ENCODE measurements at regions of chrX and their contacts with region 1.

Region 1: GRCh38 chrX:78029663-78030062 is 60.2 kb upstream of the PGAM4 start:
- DNase-seq: peak; percentile 49
- H3K4me3 Mint-ChIP-seq: no peak overlapping the region
- H3K27ac Mint-ChIP-seq: no peak overlapping the region
- H3K4me1 Mint-ChIP-seq: no peaks in the 10 kb centered on the region
- H3K27me3 Mint-ChIP-seq: no peaks in the 10 kb centered on the region
- CTCF ChIP-seq: peak; percentile 64

Region 2: GRCh38 chrX:76279000-76279399 is 1750.7 kb before region 1 on chrX:
- CTCF ChIA-PET with region 1: interaction called, 23 read pairs
- POLR2A ChIA-PET with region 1: no interaction called
- intact Hi-C with region 1: loop called (anchors 1 kb)
- DNase-seq: peak; percentile 60
- H3K4me3 Mint-ChIP-seq: no peak overlapping the region
- H3K27ac Mint-ChIP-seq: no peak overlapping the region
- H3K4me1 Mint-ChIP-seq: no peaks in the 10 kb centered on the region
- H3K27me3 Mint-ChIP-seq: no peaks in the 10 kb centered on the region
- CTCF ChIP-seq: peak; percentile 64

Region 3: DNA sequence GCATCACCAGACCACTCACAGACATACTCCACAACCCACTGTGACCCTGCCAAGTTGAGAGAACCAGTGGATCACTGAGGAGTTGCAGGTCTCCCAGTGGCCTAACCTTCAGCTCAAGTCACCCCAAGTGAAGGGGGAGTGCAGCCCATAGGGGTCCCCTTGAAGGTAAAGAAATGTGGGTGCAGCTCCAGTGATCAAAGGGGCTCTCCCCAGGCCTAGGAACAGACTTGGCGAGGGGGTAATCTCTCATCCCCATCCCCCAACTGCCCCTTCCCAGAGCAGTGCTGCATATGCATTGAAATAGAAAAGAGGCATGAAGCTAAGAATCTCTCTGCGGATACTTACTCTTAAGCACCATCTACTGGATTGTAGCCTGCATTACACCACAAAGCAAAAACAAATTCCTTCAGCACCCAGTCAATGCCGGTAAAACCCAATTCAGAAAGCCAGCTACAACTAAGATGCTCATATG is 1575.2 kb before region 1 on chrX:
- CTCF ChIA-PET with region 1: interaction called, 5 read pairs
- POLR2A ChIA-PET with region 1: no interaction called
- intact Hi-C with region 1: loop called (anchors 5 kb)
- DNase-seq: peak; percentile 20
- H3K4me3 Mint-ChIP-seq: no peak overlapping the region
- H3K27ac Mint-ChIP-seq: no peak overlapping the region
- H3K4me1 Mint-ChIP-seq: no peaks in the 10 kb centered on the region
- H3K27me3 Mint-ChIP-seq: peaks cover 29% of the 10 kb centered on the region
- CTCF ChIP-seq: peak; percentile 36

Region 4: DNA sequence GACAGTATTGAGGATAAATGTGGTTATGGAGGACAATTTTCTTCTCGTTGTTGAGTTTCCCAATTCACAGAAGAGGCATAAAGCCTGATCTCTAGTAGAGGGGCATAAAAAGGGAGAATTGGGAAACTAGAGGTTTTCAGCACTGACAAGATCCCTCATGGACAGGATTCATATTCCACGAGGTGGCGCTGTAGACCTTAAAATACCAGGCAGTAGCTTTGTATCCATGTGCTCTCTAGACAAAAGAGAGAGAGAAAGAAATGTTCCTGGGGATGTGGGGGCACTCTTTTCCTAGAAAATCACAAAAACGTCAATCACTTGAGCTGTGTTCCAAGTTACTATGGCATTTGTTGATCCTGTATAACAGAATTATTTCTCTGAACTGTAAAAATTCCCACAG is 1473.8 kb before region 1 on chrX:
- CTCF ChIA-PET with region 1: no interaction called
- POLR2A ChIA-PET with region 1: no interaction called
- intact Hi-C with region 1: loop called (anchors 2 kb)
- DNase-seq: peak; percentile 38
- H3K4me3 Mint-ChIP-seq: no peak overlapping the region
- H3K27ac Mint-ChIP-seq: no peak overlapping the region
- H3K4me1 Mint-ChIP-seq: no peaks in the 10 kb centered on the region
- H3K27me3 Mint-ChIP-seq: no peaks in the 10 kb centered on the region
- CTCF ChIP-seq: no peak

Region 5: GRCh38 chrX:77119706-77120105 is 910.0 kb before region 1 on chrX:
- CTCF ChIA-PET with region 1: no interaction called
- POLR2A ChIA-PET with region 1: no interaction called
- intact Hi-C with region 1: no loop called
- DNase-seq: no peak
- H3K4me3 Mint-ChIP-seq: no peak overlapping the region
- H3K27ac Mint-ChIP-seq: no peak overlapping the region
- H3K4me1 Mint-ChIP-seq: no peaks in the 10 kb centered on the region
- H3K27me3 Mint-ChIP-seq: no peaks in the 10 kb centered on the region
- CTCF ChIP-seq: no peak

Region 6: DNA sequence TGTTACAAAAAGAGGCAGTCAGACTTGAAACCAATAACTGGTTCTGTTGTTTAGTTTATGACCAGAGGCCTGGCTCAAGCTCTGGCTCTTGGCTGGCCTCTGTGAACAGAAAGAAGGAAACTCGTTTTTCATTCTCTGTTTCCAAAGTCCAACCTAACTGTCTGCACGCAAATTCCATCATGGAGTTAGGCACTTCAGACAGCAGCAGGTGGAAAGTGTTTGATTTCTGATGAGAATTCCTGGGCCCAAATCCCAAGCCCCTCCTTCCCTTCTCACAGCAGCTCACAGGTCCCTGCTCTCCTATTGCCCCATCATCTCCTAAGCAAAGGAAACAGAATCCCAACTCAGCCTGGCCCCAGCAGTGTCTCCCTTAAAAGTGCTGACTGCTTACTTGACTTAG is 625.2 kb before region 1 on chrX:
- CTCF ChIA-PET with region 1: no interaction called
- POLR2A ChIA-PET with region 1: no interaction called
- intact Hi-C with region 1: no loop called
- DNase-seq: no peak
- H3K4me3 Mint-ChIP-seq: no peak overlapping the region
- H3K27ac Mint-ChIP-seq: no peak overlapping the region
- H3K4me1 Mint-ChIP-seq: no peaks in the 10 kb centered on the region
- H3K27me3 Mint-ChIP-seq: no peaks in the 10 kb centered on the region
- CTCF ChIP-seq: no peak

Region 7: GRCh38 chrX:77910108-77910840 is 119.4 kb before region 1 on chrX and contains the start of gene ATP7A:
- CTCF ChIA-PET with region 1: interaction called, 36 read pairs
- POLR2A ChIA-PET with region 1: interaction called, 7 read pairs
- intact Hi-C with region 1: loop called (anchors 1 kb)
- DNase-seq: peak; percentile 79
- H3K4me3 Mint-ChIP-seq: peak within 1 kb of the TSS; percentile 91
- H3K27ac Mint-ChIP-seq: peak within 1 kb of the TSS; percentile 85
- H3K4me1 Mint-ChIP-seq: no peaks in the 10 kb centered on the region
- H3K27me3 Mint-ChIP-seq: no peaks in the 10 kb centered on the region
- CTCF ChIP-seq: no peak
- total RNA-seq, gene ATP7A: 3.8 and 4.8 TPM in 2 replicates

Region 8: GRCh38 chrX:78042601-78043000 is 12.9 kb after region 1 on chrX:
- CTCF ChIA-PET with region 1: interaction called, 11 read pairs
- POLR2A ChIA-PET with region 1: no interaction called
- intact Hi-C with region 1: no loop called
- DNase-seq: no peak
- H3K4me3 Mint-ChIP-seq: no peak overlapping the region
- H3K27ac Mint-ChIP-seq: no peak overlapping the region
- H3K4me1 Mint-ChIP-seq: no peaks in the 10 kb centered on the region
- H3K27me3 Mint-ChIP-seq: no peaks in the 10 kb centered on the region
- CTCF ChIP-seq: no peak

Region 9: GRCh38 chrX:78129714-78130113 is 100.1 kb after region 1 on chrX:
- CTCF ChIA-PET with region 1: no interaction called
- POLR2A ChIA-PET with region 1: no interaction called
- intact Hi-C with region 1: no loop called
- DNase-seq: no peak
- H3K4me3 Mint-ChIP-seq: no peak overlapping the region
- H3K27ac Mint-ChIP-seq: no peak overlapping the region
- H3K4me1 Mint-ChIP-seq: no peaks in the 10 kb centered on the region
- H3K27me3 Mint-ChIP-seq: no peaks in the 10 kb centered on the region
- CTCF ChIP-seq: no peak

Measured in MCF 10A (cell line).